H1 (cell line): ENCODE measurements at regions of chr7 and their contacts with region 1.

Region 1: DNA sequence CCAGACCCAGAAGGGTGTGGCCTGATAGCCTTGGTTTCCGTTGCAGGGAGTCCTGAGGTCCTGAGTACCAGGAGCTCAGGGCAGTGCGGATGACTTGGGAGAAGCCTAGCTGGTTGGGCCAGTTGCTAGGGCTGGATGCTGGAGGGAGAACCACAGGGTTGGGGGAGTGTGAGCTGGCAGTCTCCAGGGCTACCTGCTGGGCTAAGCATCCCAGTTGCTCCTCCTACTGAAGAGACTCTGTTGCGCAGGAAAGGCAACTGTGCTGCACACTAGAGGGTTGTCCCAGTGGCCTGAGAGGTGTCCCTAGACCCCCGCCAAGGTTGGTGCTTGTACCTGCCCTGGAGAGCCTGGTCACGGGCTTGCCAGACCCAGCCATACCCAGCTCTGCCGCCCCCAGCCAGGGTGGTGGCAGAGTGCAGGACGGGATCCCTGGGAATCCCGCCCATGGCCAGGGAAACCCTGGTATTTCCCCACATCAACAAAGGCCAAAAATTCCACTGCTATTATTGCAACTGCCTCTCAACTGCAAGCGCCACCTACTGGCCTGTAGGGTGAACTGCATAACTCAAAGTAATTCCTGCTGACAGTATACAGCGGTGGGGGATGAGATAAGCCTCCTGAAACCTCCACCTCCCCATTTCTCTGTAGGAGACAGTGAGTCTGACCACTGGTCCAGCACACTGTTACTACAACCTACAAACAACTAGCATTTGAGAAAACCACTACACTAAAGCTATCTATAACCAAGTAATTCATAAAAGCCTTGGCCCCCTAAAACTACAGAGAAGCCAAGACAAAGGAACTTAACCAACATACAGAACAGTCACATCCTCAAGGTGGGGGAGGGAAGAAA is 67.6 kb upstream of the DDC start:
- DNase-seq: peak; percentile 21 to 80
- H3K4me3 ChIP-seq: no peak overlapping the region
- H3K27ac ChIP-seq: peak overlapping the region; percentile 73
- H3K4me1 ChIP-seq: peaks cover 4 to 20% (median 9%) of the 10 kb centered on the region in 4 experiments
- H3K27me3 ChIP-seq: no peaks in the 10 kb centered on the region
- CTCF ChIP-seq: peak; percentile 48 to 93 (median 71)
- EP300 ChIP-seq: no peak
- POLR2A ChIP-seq: no peak
- RAD21 ChIP-seq: peak; percentile 49 to 61

Region 2: GRCh38 chr7:50449881-50450589 is 182.8 kb before region 1 on chr7 and contains the start of gene FIGNL1:
- CTCF ChIA-PET with region 1: no interaction called
- POLR2A ChIA-PET with region 1: no interaction called
- DNase-seq: peak; percentile 31 to 78
- H3K4me3 ChIP-seq: peak within 1 kb of the TSS; percentile 46 to 63 (median 54)
- H3K27ac ChIP-seq: no peak within 1 kb of the TSS
- H3K4me1 ChIP-seq: peaks cover 2 to 5% (median 3%) of the 10 kb centered on the region in 4 experiments; a peak in 6 of 7 replicates
- H3K27me3 ChIP-seq: peaks cover 0 to 5% (median 5%) of the 10 kb centered on the region in 4 experiments; a peak in 4 of 7 replicates
- CTCF ChIP-seq: no peak
- EP300 ChIP-seq: no peak
- POLR2A ChIP-seq: peak in 1 of 2 experiments; percentile 31; a peak in 1 of 3 replicates
- RAD21 ChIP-seq: no peak
- total RNA-seq, gene FIGNL1: 9.9 and 11.8 TPM in 2 replicates

Region 3: DNA sequence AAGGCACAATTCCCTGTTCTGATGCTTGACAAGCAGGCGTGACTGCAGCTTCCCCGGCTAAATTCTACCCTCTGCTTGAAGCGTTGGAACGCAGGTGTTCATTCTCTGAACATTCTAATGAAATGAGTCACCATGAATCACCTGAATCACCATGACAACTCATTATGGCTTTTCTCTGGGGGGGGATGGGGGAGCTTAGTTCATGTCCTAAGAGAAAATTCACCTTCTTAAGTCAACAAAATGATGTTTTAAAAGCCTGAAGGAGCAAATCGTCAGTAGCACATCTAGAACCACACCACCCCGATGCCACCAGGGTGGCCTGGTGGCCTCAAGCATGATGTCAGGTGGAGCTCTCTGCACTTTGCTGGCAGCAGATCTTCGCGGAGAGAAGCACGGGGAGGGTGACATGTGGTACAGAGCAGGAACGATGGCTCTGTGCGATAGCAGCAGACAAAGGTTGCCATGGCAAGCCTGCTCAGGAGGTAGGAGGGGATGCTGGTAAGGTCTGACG is 101.3 kb before region 1 on chr7:
- CTCF ChIA-PET with region 1: no interaction called
- POLR2A ChIA-PET with region 1: no interaction called
- DNase-seq: peak in 1 of 2 experiments; percentile 50
- H3K4me3 ChIP-seq: no peak overlapping the region
- H3K27ac ChIP-seq: 0 out of 2 replicates have a peak overlapping the region, but pooled peaks have one; percentile 45
- H3K4me1 ChIP-seq: peaks cover 0 to 6% (median 2%) of the 10 kb centered on the region in 4 experiments; a peak in 3 of 7 replicates
- H3K27me3 ChIP-seq: no peaks in the 10 kb centered on the region
- CTCF ChIP-seq: no peak
- EP300 ChIP-seq: no peak
- POLR2A ChIP-seq: no peak
- RAD21 ChIP-seq: no peak

Region 4: GRCh38 chr7:50588937-50589336 is 43.9 kb before region 1 on chr7:
- CTCF ChIA-PET with region 1: interaction called, 21 read pairs
- POLR2A ChIA-PET with region 1: no interaction called
- DNase-seq: peak in 1 of 2 experiments; percentile 62
- H3K4me3 ChIP-seq: no peak overlapping the region
- H3K27ac ChIP-seq: no peak overlapping the region
- H3K4me1 ChIP-seq: no peaks in the 10 kb centered on the region; a peak in 1 of 7 replicates
- H3K27me3 ChIP-seq: no peaks in the 10 kb centered on the region
- CTCF ChIP-seq: peak; percentile 47 to 79 (median 58)
- EP300 ChIP-seq: no peak
- POLR2A ChIP-seq: no peak
- RAD21 ChIP-seq: peak; percentile 41 to 59; a peak in 3 of 4 replicates

Region 5: GRCh38 chr7:50595491-50596102 is 37.2 kb before region 1 on chr7:
- CTCF ChIA-PET with region 1: interaction called, 33 read pairs
- POLR2A ChIA-PET with region 1: no interaction called
- DNase-seq: no peak
- H3K4me3 ChIP-seq: no peak overlapping the region
- H3K27ac ChIP-seq: no peak overlapping the region
- H3K4me1 ChIP-seq: no peaks in the 10 kb centered on the region; a peak in 1 of 7 replicates
- H3K27me3 ChIP-seq: no peaks in the 10 kb centered on the region
- CTCF ChIP-seq: peak; percentile 67 to 74 (median 67)
- EP300 ChIP-seq: no peak
- POLR2A ChIP-seq: no peak
- RAD21 ChIP-seq: peak; percentile 70 to 75

Region 6: DNA sequence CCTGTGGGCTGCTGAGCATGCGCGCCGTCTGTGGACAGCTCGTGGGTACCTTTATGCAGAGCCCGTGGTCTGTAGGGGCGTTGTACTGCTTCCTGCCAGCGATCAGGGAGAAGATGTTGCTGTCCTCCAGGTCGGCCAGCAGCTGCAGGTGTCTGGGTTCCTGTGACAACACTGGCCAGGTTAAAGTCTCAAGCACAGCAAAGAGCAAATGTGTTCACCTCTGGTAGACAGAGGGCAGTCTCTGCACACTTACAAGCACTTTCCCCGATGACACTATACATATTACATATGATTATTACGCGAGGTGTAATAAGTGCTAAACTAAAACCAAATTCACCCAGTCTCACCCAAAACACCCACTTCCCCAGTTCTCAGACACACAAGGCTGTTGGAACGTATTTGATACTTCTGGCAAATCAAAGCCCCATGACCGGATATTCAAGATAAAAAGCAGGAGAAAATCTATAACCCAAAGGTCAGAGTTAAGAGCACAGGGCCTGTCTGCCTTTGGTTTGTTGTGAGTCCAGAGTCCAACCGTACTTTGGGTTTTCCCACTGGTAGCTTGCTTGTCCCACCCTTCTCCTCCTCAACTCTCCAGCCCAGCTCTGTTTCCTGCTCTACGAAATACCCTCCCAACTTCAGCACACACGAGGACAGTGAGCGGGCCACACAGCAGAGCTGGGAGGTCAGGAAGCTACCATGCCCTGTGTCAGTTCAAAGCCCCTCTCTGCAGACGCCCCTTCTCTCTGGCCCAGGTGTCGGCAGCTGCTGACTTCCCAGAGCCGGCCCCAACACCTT is 17.9 kb before region 1 on chr7:
- CTCF ChIA-PET with region 1: interaction called, 56 read pairs
- POLR2A ChIA-PET with region 1: interaction called, 4 read pairs
- DNase-seq: no peak
- H3K4me3 ChIP-seq: no peak overlapping the region
- H3K27ac ChIP-seq: no peak overlapping the region
- H3K4me1 ChIP-seq: no peaks in the 10 kb centered on the region
- H3K27me3 ChIP-seq: no peaks in the 10 kb centered on the region
- CTCF ChIP-seq: peak in 2 of 3 experiments; percentile 3 to 15; a peak in 1 of 4 replicates
- EP300 ChIP-seq: no peak
- POLR2A ChIP-seq: no peak
- RAD21 ChIP-seq: peak; percentile 9 to 34; a peak in 3 of 4 replicates

Region 7: DNA sequence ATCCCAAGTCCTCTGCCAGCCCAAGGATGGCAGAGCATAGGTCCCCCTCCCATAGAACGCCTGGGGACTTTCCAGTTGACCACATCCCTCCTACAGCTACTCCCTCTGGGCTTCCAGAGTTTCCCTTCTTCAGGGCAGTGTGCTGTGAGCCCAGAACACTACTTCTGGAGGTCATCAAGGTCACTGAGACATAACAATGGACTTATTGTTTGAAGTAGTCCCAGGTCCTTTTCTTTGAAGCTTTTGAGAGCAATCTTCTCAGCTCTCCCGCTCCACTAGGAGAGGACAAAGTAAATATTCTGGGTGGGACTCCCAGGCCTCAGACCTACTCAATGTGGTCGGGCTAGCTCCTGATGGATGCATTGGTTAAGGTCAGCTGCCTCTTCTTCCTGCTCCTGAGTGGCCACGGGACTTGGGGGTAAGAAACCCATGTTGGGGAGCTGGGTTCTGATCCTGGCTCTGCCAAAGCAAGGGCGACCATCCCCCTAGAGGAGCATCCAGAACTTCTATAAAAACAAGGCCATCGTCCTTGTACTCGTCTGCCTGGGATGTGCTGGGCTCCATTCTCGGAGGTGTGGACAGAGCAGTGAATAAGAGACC is 15.9 kb after region 1 on chr7:
- CTCF ChIA-PET with region 1: interaction called, 17 read pairs
- POLR2A ChIA-PET with region 1: no interaction called
- DNase-seq: peak in 1 of 2 experiments; percentile 26
- H3K4me3 ChIP-seq: no peak overlapping the region
- H3K27ac ChIP-seq: no peak overlapping the region
- H3K4me1 ChIP-seq: no peaks in the 10 kb centered on the region
- H3K27me3 ChIP-seq: no peaks in the 10 kb centered on the region
- CTCF ChIP-seq: no peak
- EP300 ChIP-seq: no peak
- POLR2A ChIP-seq: no peak
- RAD21 ChIP-seq: no peak

Region 8: DNA sequence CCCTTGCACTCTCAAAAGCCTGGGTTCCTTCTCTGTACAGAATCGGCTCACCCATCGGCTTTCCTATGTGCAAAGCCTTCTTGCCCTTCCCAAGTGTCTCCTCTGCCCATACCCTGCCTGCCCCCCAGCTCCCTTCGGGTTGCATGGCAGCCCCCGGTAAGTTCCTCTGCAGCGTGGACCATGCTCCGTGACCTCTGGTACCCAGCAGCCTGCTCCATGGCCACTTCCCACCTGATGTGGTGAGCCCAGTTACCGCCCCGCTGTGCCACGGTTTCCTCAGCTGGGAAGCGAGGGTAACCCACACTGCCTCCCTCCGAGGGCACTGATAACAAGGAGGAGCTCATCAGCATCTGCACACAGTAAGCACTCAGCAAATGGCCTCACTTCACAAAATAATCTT is 39.3 kb after region 1 on chr7:
- CTCF ChIA-PET with region 1: interaction called, 17 read pairs
- POLR2A ChIA-PET with region 1: no interaction called
- DNase-seq: no peak
- H3K4me3 ChIP-seq: no peak overlapping the region
- H3K27ac ChIP-seq: no peak overlapping the region
- H3K4me1 ChIP-seq: no peaks in the 10 kb centered on the region
- H3K27me3 ChIP-seq: no peaks in the 10 kb centered on the region
- CTCF ChIP-seq: no peak
- EP300 ChIP-seq: no peak
- POLR2A ChIP-seq: no peak
- RAD21 ChIP-seq: no peak